GM13977 (cell line): ENCODE measurements at regions of chr2 and their contacts with region 1.

Region 1: DNA sequence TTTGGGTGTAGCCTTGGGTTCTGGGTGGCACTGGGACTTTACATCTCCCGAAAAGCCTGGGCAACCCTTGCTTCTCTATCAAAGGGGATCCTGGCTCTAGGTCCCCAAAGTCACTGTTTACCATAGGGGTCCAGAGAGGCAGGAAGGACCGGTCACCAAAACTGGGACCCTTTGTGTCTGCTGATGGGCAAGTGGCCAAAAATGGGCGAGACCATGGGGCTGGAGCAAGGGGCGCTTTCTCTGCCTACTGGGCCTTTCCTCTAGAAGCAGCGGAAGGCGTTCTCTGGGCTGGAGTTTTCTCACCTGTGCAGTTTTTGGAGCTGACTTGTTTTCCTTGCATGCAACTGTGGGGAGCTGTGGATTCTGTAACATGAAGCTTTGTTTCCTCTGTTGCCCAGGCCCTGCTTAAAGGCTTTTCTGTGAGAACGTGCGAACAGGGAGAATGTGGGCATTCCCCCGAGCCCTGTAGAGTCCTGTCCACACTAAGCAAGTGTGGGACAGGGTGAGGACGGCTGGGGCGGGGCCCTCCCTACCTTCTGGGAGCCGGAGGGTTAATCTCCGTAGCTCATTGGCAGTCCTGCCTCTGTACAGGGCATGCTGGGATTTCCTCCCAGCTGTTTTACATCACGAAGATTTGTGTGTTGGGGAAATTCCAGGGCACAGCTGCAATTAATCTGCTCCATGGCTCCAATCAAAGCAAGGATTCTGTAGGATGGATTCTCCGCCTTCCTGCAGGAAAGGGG is 50.2 kb downstream of the TGOLN2 start:
- DNase-seq: no peak
- CTCF ChIP-seq: no peak

Region 2: DNA sequence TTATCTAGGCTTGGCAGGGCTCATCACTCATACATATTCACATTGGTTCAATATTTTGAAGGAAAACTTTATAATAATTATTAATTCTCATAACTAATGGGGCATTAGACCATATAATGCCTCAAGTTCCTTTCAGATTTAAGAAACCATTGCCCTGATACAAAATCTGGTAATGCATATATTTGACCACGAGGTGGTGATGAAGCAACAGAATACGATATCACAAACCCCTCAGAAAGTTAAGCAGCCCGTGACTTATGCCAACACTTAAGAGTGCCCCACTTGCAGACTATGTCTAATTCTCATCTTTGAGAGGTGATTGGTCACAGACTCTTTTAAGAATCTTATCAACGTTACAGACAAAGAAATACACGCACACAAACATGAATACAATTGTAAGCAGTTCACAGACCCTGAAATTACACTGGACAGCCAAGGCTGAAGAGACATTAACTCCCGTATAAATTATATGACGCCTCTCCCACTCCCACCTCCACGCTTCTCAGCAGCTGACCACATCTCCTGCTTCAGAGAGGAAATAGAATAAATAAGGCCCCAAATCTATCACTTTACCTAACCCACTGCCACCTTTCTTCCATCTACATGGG is 781.9 kb before region 1 on chr2:
- in situ Hi-C with region 1: loop called (anchors 25 kb)
- DNase-seq: peak; percentile 39
- CTCF ChIP-seq: peak; percentile 65

Region 3: GRCh38 chr2:84905181-84906107 is 372.1 kb before region 1 on chr2 and contains the start of gene TMSB10:
- in situ Hi-C with region 1: loop called (anchors 25 kb)
- DNase-seq: peak; percentile 94
- CTCF ChIP-seq: peak; percentile 25

Region 4: GRCh38 chr2:85066874-85067351 is 210.7 kb before region 1 on chr2:
- in situ Hi-C with region 1: loop called (anchors 25 kb)
- DNase-seq: peak; percentile 64
- CTCF ChIP-seq: peak; percentile 61

Region 5: GRCh38 chr2:85369500-85369899 is 91.9 kb after region 1 on chr2:
- in situ Hi-C with region 1: no loop called
- DNase-seq: no peak
- CTCF ChIP-seq: no peak